K562 (cell line): ENCODE measurements at regions of chr3 and their contacts with region 1.

Region 1: GRCh38 chr3:157532529-157533297 is 29.5 kb upstream of the VEPH1 start:
- DNase-seq: peak; percentile 54 to 85 (median 63)
- ATAC-seq: peak; percentile 87
- H3K4me3 ChIP-seq: no peak overlapping the region
- H3K27ac ChIP-seq: peak overlapping the region; percentile 61
- H3K4me1 ChIP-seq: peaks cover 0 to 55% of the 10 kb centered on the region in 2 experiments; a peak in 4 of 5 replicates
- H3K27me3 ChIP-seq: no peaks in the 10 kb centered on the region
- CTCF ChIP-seq: peak; percentile 72 to 87 (median 72)
- EP300 ChIP-seq: peak; percentile 9; the same call in 1 of the 2 replicates
- POLR2A ChIP-seq: no peak
- RAD21 ChIP-seq: peak; percentile 92

Region 2: DNA sequence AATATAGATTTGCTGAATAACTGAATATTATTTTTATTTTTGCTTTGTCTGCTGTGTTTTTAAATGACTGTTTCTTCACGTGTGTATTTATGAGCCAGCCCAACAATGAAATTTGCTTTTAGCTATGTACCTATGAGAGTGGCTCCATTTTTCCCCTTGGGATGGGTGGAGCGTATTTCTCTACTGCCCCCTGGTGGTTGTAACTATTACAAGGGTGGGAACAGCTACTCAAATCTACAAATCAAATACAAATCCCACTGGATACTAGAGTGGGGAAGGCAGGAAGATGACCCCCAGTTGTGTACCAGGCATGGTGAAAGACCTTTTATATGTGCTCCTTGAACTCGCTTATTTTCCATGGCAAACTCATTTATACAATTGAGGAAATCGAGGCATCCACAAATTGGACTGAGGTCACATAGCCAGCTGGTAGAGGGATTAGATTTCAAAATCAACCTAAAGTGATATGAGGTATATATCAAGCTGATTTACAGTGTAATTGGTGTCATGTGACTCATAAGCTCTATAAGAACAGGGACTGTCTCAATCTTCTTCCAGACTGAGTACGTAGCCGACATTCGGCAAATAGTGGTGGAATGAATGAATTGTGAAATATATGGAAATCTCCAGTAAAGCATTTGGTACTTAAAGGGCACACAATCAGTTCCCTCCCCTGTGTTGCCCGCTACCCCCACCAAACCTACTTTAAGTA is 40.0 kb after region 1 on chr3:
- CTCF ChIA-PET with region 1: interaction called, 21 read pairs
- POLR2A ChIA-PET with region 1: interaction called, 8 read pairs
- in situ Hi-C with region 1: no loop called
- intact Hi-C with region 1: loop called (anchors 1 kb)
- DNase-seq: peak; percentile 65 to 71 (median 68)
- ATAC-seq: peak; percentile 93
- H3K4me3 ChIP-seq: no peak overlapping the region
- H3K27ac ChIP-seq: no peak overlapping the region
- H3K4me1 ChIP-seq: no peaks in the 10 kb centered on the region
- H3K27me3 ChIP-seq: no peaks in the 10 kb centered on the region
- CTCF ChIP-seq: peak; percentile 68 to 74 (median 72)
- EP300 ChIP-seq: no peak
- POLR2A ChIP-seq: no peak
- RAD21 ChIP-seq: peak; percentile 68 to 87

Region 3: GRCh38 chr3:157595259-157595658 is 62.5 kb after region 1 on chr3:
- CTCF ChIA-PET with region 1: no interaction called
- POLR2A ChIA-PET with region 1: no interaction called
- in situ Hi-C with region 1: no loop called
- intact Hi-C with region 1: loop called (anchors 1 kb)
- DNase-seq: peak in 1 of 4 experiments; percentile 7
- ATAC-seq: peak; percentile 55
- H3K4me3 ChIP-seq: no peak overlapping the region
- H3K27ac ChIP-seq: no peak overlapping the region
- H3K4me1 ChIP-seq: no peaks in the 10 kb centered on the region
- H3K27me3 ChIP-seq: no peaks in the 10 kb centered on the region
- CTCF ChIP-seq: peak in 1 of 3 experiments; percentile 37; a peak in 2 of 6 replicates
- EP300 ChIP-seq: no peak
- POLR2A ChIP-seq: no peak
- RAD21 ChIP-seq: peak; percentile 24 to 59; a peak in 3 of 4 replicates